HCT116 (cell line): ENCODE measurements at regions of chr19 and their contacts with region 1.

Region 1: GRCh38 chr19:35931161-35931873 is 4.9 kb upstream of the LRFN3 start:
- DNase-seq: peak; percentile 99
- ATAC-seq: peak; percentile 95
- H3K4me3 ChIP-seq: peak overlapping the region; percentile 36 to 48
- H3K27ac ChIP-seq: peak overlapping the region; percentile 55
- H3K4me1 ChIP-seq: peaks cover 10 to 22% of the 10 kb centered on the region in 2 experiments; a peak in 3 of 4 replicates
- H3K27me3 ChIP-seq: no peaks in the 10 kb centered on the region
- CTCF ChIP-seq: peak; percentile 73 to 96 (median 85)
- POLR2A ChIP-seq: peak; percentile 98
- RAD21 ChIP-seq: peak; percentile 100

Region 2: DNA sequence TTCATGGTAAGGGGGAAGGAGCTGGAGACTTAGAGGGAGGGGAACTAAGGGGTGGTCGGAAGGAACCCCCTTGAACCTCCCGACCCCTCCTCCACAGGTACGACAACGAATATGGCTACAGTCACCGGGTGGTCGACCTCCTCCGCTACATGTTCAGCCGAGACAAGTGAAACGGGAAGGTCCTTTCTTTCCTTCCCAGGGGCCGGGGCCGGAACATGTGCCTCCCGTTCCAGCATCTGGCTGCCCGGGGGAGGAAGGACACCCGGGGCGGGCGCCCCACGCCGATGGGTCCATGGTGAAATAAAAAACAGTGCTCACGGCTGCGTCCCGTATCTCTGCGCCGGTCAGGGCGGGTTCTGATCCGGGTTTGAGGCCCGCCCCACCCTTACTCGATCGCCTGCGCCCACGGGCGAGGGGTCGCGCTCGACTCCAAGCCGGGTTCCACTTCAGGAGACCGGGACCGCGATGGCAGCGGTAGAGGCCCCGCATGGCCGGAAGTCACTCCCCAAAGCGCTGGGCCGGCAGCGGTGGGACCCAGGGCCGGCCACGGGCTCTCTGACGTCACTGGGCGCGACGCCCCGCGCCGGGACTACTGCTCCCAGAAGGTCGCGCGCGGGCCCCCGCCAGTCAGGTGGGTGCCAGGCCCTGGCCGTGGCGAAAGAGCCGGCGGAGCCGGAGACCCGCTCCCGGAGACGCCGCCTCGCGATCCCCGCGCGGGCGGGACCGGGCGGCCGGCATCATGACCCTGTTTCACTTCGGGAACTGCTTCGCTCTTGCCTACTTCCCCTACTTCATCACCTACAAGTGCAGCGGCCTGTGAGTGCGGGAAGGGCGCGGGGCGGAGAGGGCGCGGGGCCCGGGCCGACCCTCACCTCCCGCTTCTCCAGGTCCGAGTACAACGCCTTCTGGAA is 386.1 kb before region 1 on chr19 and contains the start of gene TMEM147:
- CTCF ChIA-PET with region 1: no interaction called
- POLR2A ChIA-PET with region 1: no interaction called
- RAD21 ChIA-PET with region 1: no interaction called
- intact Hi-C with region 1: loop called (anchors 10 kb)
- DNase-seq: peak; percentile 70
- ATAC-seq: peak; percentile 93
- H3K4me3 ChIP-seq: peak within 1 kb of the TSS; percentile 69 to 100
- H3K27ac ChIP-seq: peak within 1 kb of the TSS; percentile 89
- H3K4me1 ChIP-seq: peaks cover 9 to 22% of the 10 kb centered on the region in 2 experiments
- H3K27me3 ChIP-seq: no peaks in the 10 kb centered on the region
- CTCF ChIP-seq: no peak
- POLR2A ChIP-seq: peak; percentile 77
- RAD21 ChIP-seq: no peak
- total RNA-seq, gene TMEM147: 128 TPM

Region 3: GRCh38 chr19:35693830-35694599 is 237.3 kb before region 1 on chr19:
- CTCF ChIA-PET with region 1: interaction called, 4 read pairs
- POLR2A ChIA-PET with region 1: no interaction called
- RAD21 ChIA-PET with region 1: no interaction called
- intact Hi-C with region 1: loop called (anchors 1 kb)
- DNase-seq: peak; percentile 85
- ATAC-seq: peak; percentile 99
- H3K4me3 ChIP-seq: no peak overlapping the region
- H3K27ac ChIP-seq: no peak overlapping the region
- H3K4me1 ChIP-seq: peaks cover 5 to 9% of the 10 kb centered on the region in 2 experiments; a peak in 2 of 4 replicates
- H3K27me3 ChIP-seq: no peaks in the 10 kb centered on the region
- CTCF ChIP-seq: peak; percentile 98 to 99 (median 99)
- POLR2A ChIP-seq: no peak
- RAD21 ChIP-seq: peak; percentile 95

Region 4: GRCh38 chr19:35748106-35749020 is 183.0 kb before region 1 on chr19 and contains the start of gene LIN37:
- CTCF ChIA-PET with region 1: interaction called, 3 read pairs
- POLR2A ChIA-PET with region 1: interaction called, 6 read pairs
- RAD21 ChIA-PET with region 1: no interaction called
- intact Hi-C with region 1: loop called (anchors 1 kb)
- DNase-seq: peak; percentile 99
- ATAC-seq: peak; percentile 81
- H3K4me3 ChIP-seq: peak within 1 kb of the TSS; percentile 86 to 87
- H3K27ac ChIP-seq: peak within 1 kb of the TSS; percentile 54
- H3K4me1 ChIP-seq: peaks cover 20 to 29% of the 10 kb centered on the region in 2 experiments
- H3K27me3 ChIP-seq: no peaks in the 10 kb centered on the region
- CTCF ChIP-seq: no peak
- POLR2A ChIP-seq: peak; percentile 71
- RAD21 ChIP-seq: no peak
- total RNA-seq, gene LIN37: 10.1 TPM